BJ (cell line): ENCODE measurements at regions of chr17 and their contacts with region 1.

Region 1: GRCh38 chr17:44110823-44111633 is 12.4 kb downstream of the HDAC5 start:
- DNase-seq: peak; percentile 62
- H3K4me3 ChIP-seq: peak overlapping the region; percentile 54
- H3K27me3 ChIP-seq: no peaks in the 10 kb centered on the region
- CTCF ChIP-seq: no peak

Region 2: DNA sequence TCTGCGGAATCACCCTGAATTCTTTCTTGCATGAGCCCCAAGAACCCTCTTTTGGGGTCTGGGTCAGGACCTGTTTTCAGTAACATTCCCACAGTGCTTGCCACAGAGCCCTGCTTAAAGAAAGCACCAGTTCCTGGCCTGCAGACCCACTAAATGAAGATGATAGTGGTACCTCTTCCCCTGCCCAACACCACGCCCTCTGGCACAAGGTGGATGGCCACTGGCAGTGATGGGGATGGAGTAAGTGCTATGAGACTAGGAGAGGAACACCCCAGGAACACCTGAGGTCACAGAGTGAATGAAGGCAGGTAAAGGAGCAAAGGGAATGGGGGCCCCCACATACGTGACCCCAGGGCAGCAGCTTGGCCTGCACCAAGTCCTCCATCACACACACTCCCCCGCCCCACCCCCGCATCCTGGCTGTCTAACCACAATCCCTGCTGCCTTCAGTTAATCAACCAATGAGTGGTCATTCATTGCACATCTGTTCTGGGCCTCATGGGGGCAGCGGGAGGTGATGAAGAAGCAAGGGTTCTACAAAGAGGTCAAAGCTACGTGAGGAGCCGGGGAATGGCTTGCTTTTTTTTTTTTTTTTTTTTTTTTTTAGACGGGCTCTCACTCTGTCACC is 164.8 kb before region 1 on chr17:
- CTCF ChIA-PET with region 1: interaction called, 12 read pairs
- POLR2A ChIA-PET with region 1: no interaction called
- DNase-seq: no peak
- H3K4me3 ChIP-seq: no peak overlapping the region
- H3K27me3 ChIP-seq: peaks cover 7% of the 10 kb centered on the region
- CTCF ChIP-seq: no peak

Region 3: DNA sequence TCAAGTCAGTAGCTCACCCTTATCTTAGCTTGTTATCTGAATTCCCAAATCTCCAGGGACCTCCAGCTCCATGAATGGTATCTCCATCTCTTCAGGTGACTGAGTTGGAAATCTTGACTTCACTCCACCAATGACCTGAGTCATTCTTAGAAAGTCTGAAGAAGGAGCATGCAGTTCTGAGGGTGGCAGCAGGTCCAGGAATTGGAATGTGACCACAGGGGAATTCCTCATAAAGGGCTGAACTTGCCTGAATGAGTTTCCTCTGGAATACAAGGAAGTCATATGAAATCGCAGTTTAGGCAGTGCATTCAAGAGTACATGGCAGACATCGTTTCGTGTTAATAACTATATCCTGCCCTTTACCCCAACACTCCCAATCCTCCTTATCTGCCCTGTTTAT is 144.8 kb before region 1 on chr17:
- CTCF ChIA-PET with region 1: no interaction called
- POLR2A ChIA-PET with region 1: no interaction called
- DNase-seq: no peak
- H3K4me3 ChIP-seq: no peak overlapping the region
- H3K27me3 ChIP-seq: peaks cover 4% of the 10 kb centered on the region; the same call in 1 of the 2 replicates
- CTCF ChIP-seq: no peak

Region 4: GRCh38 chr17:44061446-44061845 is 49.6 kb before region 1 on chr17:
- CTCF ChIA-PET with region 1: interaction called, 18 read pairs
- POLR2A ChIA-PET with region 1: no interaction called
- DNase-seq: peak; percentile 65
- H3K4me3 ChIP-seq: no peak overlapping the region
- H3K27me3 ChIP-seq: no peaks in the 10 kb centered on the region
- CTCF ChIP-seq: no peak

Region 5: DNA sequence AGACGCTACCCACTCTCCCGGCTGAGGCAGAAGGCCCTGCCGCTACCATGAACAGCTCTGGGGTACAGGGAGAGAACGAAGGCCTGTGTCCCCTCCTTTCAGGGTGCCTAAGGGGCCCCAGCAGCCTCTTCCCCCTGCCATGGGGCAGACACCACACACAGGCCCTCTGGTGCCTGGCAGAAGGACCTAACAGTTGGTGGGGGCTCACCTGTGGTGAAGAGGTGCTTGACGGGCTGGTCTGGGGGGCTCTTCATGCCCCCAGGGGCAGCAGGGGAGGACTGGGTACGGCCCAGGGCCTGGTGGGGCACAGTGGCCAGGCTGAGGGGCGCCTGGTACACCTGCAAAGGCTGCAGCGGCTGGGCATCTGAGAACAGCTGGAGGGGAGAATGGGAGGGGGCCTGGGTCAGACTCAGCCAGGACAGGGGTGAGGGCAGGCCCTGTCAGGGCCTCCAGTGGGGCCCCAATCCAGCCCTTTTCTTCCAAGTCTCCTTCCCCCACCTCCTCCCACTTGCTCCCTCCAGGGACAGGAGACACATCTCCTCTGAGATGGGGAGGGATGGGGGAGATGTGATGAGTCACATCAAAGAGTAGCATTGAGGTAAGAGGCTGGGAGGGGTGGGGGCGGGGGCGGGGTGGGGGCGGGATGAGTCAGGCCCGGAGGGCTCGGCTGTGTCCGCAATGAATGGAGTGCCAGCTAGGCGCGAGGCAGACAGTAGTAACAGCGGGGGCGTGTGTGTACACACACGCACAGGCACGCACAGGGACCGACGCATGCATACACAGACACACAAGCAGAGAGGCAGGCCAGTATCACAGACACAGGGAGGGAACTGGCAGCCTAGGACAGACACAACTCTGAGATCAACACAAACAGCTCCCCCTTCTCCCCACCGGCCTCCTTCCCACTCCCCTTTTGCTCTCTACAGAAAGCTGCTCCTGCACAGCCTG is 24.4 kb before region 1 on chr17:
- CTCF ChIA-PET with region 1: interaction called, 20 read pairs
- POLR2A ChIA-PET with region 1: interaction called, 15 read pairs
- DNase-seq: peak; percentile 62
- H3K4me3 ChIP-seq: no peak overlapping the region
- H3K27me3 ChIP-seq: no peaks in the 10 kb centered on the region
- CTCF ChIP-seq: no peak

Region 6: DNA sequence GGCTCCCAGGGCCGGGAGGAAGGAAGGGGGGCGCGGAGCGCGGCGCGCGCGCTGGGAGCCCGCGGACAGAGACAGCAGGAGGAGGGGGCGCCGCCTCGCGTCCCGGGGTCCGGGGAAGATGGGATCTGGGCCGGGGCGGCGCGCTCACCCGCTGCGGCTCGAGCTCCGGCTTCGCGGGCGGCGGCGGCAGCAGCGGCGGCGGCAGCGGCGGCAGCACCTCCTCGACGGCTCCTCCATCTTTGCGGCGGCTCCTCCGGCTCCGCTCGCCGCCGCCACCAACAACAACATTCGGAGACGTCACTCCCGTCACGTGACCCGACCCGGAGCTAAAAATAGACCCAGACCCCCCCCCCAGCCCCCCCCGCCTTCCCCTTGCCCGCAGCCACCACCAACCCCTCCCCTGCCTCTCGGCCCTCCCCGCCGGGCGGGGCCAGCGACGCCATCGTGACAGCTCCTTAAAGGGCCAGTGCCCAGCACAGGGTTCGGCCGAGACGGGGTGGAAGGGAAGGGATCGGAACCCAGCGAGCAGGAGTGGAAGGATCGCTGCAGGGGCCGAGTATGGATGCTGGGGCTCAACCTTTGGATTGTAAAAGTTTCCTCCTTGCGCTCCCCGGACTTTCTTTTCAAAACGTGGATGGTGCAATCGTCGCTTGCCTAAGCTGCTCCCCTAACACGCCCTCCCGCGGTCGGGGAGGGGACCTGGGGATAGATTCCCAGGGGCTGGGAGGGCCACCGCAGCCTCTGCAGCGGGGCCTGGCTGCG is 12.5 kb after region 1 on chr17 and contains the start of gene HDAC5:
- CTCF ChIA-PET with region 1: interaction called, 13 read pairs
- POLR2A ChIA-PET with region 1: interaction called, 6 read pairs
- DNase-seq: peak; percentile 53
- H3K4me3 ChIP-seq: peak within 1 kb of the TSS; percentile 95
- H3K27me3 ChIP-seq: no peaks in the 10 kb centered on the region
- CTCF ChIP-seq: peak; percentile 74
- polyA plus RNA-seq, gene HDAC5: 46.4 and 102 TPM in 2 replicates